CD8-positive, alpha-beta T cell (primary cell): ENCODE measurements at regions of chr20 and their contacts with region 1.

Region 1: GRCh38 chr20:23530937-23531567 is 37.2 kb downstream of the CST9L start:
- DNase-seq: peak in 2 of 9 experiments; percentile 24 to 39
- ATAC-seq: no peak
- H3K4me3 ChIP-seq: no peak overlapping the region
- H3K4me3 Mint-ChIP-seq: no peak overlapping the region
- H3K27ac ChIP-seq: no peak overlapping the region
- H3K27ac Mint-ChIP-seq: peak overlapping the region; percentile 5
- H3K4me1 ChIP-seq: no peaks in the 10 kb centered on the region
- H3K4me1 Mint-ChIP-seq: peaks cover 10% of the 10 kb centered on the region
- H3K27me3 ChIP-seq: no peaks in the 10 kb centered on the region
- H3K27me3 Mint-ChIP-seq: no peaks in the 10 kb centered on the region
- CTCF ChIP-seq: no peak

Region 2: DNA sequence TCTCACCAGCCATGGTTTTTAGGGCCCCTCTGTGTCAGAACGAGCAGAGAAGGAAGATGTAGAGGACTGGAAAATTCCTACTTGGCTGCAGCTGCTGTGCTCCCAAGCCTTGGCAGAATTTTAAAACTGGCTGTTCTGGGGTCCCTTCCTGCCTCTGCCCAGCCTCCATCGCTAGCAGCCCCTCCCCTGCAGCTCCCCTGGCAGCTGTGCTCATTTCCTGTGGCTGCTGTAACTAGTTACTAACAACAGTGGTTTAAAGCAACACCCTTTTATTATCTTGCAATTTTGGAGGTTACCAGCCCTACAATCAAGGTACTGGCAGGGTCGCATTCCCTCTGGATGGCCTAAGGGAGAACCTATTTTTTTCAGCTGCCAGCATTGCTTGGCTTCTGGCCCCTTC is 74.6 kb before region 1 on chr20:
- CTCF ChIA-PET with region 1: no interaction called
- POLR2A ChIA-PET with region 1: no interaction called
- intact Hi-C with region 1: loop called (anchors 10 kb)
- DNase-seq: peak in 5 of 9 experiments; percentile 30 to 74 (median 54)
- ATAC-seq: peak; percentile 84
- H3K4me3 ChIP-seq: peak overlapping the region in 1 of 2 experiments; percentile 1
- H3K4me3 Mint-ChIP-seq: peak overlapping the region; percentile 50
- H3K27ac ChIP-seq: peak overlapping the region; percentile 53 to 91
- H3K27ac Mint-ChIP-seq: peak overlapping the region; percentile 83
- H3K4me1 ChIP-seq: peaks cover 20% of the 10 kb centered on the region
- H3K4me1 Mint-ChIP-seq: peaks cover 28% of the 10 kb centered on the region
- H3K27me3 ChIP-seq: peaks cover 0 to 4% of the 10 kb centered on the region in 2 experiments
- H3K27me3 Mint-ChIP-seq: no peaks in the 10 kb centered on the region
- CTCF ChIP-seq: no peak